Activated B cell treated with CpG ODN at 0.5 μM for 24 hours (primary cell): ENCODE measurements at regions of chr18 and their contacts with region 1.

Region 1: DNA sequence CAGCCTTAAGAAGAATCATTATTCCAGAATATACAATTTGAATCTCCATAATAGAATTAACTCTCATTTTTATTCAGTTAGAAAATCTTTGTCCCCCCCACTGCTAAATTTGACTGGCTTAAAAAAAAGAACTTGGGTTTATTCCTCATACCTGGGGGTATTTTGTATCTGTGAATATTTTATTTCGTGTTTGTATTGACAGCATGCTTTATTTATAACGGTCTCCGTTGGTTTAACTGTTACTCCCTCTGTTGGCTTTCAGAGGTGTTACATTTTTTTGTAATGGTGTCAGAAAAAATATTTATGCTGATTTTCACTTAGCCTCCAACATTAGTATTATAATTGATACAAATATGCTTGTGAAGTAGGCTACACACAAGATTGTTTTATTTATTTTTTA is 109.1 kb downstream of the HAUS1 start:
- DNase-seq: no peak
- ATAC-seq: peak; percentile 52
- H3K4me3 Mint-ChIP-seq: no peak overlapping the region
- H3K27ac Mint-ChIP-seq: no peak overlapping the region
- H3K4me1 Mint-ChIP-seq: peaks cover 53% of the 10 kb centered on the region
- H3K27me3 Mint-ChIP-seq: no peaks in the 10 kb centered on the region
- CTCF ChIP-seq: peak; percentile 44

Region 2: DNA sequence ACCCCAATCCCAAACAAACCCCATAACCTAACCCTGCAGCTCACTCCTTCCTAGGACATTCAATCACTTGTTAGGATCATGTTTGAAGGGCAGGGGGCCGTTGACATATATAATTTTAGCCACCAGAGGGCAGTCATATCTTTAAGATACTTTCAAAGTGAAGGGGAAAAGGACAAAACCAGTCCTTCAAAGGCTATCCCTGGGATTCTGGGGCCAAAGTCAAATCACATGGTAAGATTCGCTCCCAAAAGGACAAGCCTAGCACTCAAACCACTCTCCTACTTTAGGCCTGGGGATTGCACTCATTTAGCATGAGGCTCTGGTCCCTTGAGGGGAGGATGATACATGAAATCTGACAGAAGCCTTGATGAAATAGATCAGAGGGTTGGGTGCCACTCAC is 64.5 kb before region 1 on chr18:
- CTCF ChIA-PET with region 1: no interaction called
- POLR2A ChIA-PET with region 1: no interaction called
- intact Hi-C with region 1: loop called (anchors 1 kb)
- DNase-seq: no peak
- ATAC-seq: no peak
- H3K4me3 Mint-ChIP-seq: no peak overlapping the region
- H3K27ac Mint-ChIP-seq: no peak overlapping the region
- H3K4me1 Mint-ChIP-seq: no peaks in the 10 kb centered on the region
- H3K27me3 Mint-ChIP-seq: no peaks in the 10 kb centered on the region
- CTCF ChIP-seq: peak; percentile 59

Region 3: GRCh38 chr18:46226461-46226860 is 13.2 kb after region 1 on chr18:
- CTCF ChIA-PET with region 1: interaction called, 3 read pairs
- POLR2A ChIA-PET with region 1: interaction called, 8 read pairs
- intact Hi-C with region 1: loop called (anchors 2 kb)
- DNase-seq: no peak
- ATAC-seq: no peak
- H3K4me3 Mint-ChIP-seq: no peak overlapping the region
- H3K27ac Mint-ChIP-seq: no peak overlapping the region
- H3K4me1 Mint-ChIP-seq: peaks cover 46% of the 10 kb centered on the region
- H3K27me3 Mint-ChIP-seq: no peaks in the 10 kb centered on the region
- CTCF ChIP-seq: no peak